Calu3 (cell line): ENCODE measurements at regions of chr16 and their contacts with region 1.

Region 1: DNA sequence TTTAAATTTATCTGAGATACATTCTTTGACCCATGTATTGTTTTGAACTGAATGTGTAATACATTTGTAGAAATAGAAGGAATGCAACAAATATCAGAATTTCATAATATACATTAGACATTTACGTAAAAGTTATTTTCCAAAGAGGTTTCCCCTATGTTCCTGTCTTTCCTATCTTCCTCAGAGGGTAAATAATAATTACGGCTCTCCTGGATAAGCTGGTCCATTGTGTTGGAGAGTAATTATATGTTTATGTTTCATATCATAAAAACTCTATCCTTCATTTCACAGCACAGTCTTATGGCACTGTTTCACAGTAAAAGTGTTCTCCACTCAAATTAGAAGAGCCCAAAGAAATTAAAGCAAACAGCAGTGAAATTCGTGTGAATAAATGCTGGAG is 85.0 kb upstream of the SIAH1 start:
- DNase-seq: no peak
- H3K4me3 Mint-ChIP-seq: no peak overlapping the region
- H3K27ac Mint-ChIP-seq: no peak overlapping the region
- H3K4me1 Mint-ChIP-seq: no peaks in the 10 kb centered on the region
- H3K27me3 Mint-ChIP-seq: no peaks in the 10 kb centered on the region
- CTCF ChIP-seq: no peak

Region 2: DNA sequence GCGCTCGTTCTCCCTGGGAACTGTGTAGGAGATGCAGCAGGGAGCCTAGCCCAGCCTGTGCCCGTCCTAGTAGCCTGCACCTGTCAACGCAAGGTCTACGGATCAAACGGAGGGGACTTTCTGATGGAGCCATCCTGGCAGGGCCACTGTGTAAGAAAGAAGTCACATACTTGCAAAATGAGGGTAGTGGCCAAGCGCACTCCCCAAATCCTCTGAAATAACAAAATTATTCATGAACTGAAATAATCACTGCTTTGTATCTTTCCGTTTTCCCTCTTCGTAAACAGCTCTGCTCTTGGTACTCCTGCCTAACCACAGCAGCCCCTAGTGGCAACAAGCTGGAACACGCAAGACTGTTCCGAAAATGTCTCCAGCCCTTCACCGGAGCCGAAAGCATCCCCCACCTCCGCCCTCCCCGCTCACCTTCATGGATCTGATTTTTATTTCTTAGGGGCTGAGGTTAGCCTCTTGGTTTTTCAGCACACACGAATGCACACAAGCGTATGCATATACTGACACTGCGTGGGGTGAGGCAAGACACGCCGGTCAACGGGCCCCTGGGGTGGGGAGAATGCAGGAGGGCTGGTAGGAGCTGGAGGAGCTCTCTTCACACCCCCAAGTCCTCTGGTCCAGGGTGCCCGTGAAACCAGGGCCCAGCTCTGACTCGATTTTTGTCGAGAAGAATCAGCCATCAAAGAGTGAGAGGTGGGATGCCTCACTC is 415.2 kb before region 1 on chr16:
- CTCF ChIA-PET with region 1: no interaction called
- intact Hi-C with region 1: no loop called
- DNase-seq: peak; percentile 52
- H3K4me3 Mint-ChIP-seq: no peak overlapping the region
- H3K27ac Mint-ChIP-seq: no peak overlapping the region
- H3K4me1 Mint-ChIP-seq: no peaks in the 10 kb centered on the region
- H3K27me3 Mint-ChIP-seq: peaks cover 74% of the 10 kb centered on the region
- CTCF ChIP-seq: peak; percentile 81

Region 3: GRCh38 chr16:48394826-48395774 is 75.1 kb before region 1 on chr16:
- CTCF ChIA-PET with region 1: interaction called, 11 read pairs
- intact Hi-C with region 1: no loop called
- DNase-seq: no peak
- H3K4me3 Mint-ChIP-seq: no peak overlapping the region
- H3K27ac Mint-ChIP-seq: no peak overlapping the region
- H3K4me1 Mint-ChIP-seq: peaks cover 13% of the 10 kb centered on the region
- H3K27me3 Mint-ChIP-seq: no peaks in the 10 kb centered on the region
- CTCF ChIP-seq: no peak